HepG2 (cell line): ENCODE measurements at regions of chr12 and their contacts with region 1.

Region 1: DNA sequence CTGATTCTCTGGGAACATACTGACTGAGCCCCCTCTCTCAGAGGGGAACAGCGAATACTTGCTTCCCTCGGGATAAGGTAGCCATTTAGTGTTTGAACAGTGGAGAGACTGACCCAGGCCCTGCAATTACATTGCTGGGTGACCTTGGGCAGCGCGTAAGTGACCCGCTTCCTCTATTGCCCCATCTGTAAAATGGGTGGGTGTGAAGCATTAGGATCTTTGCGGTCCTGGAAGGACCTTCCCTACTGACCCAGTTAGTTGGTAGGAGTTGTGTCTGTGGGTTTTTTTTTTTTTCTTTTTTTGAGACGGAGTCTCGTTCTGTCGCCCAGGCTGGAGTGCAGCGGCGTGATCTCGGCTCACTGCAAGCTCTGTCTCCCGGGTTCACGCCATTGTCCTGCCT is 1.2 kb upstream of the KMT5A start:
- DNase-seq: no peak
- ATAC-seq: no peak
- H3K4me3 ChIP-seq: peak overlapping the region; percentile 66 to 73 (median 68)
- H3K27ac ChIP-seq: peak overlapping the region; percentile 85
- H3K4me1 ChIP-seq: peaks cover 46% of the 10 kb centered on the region
- H3K27me3 ChIP-seq: no peaks in the 10 kb centered on the region
- CTCF ChIP-seq: no peak
- EP300 ChIP-seq: no peak
- POLR2A ChIP-seq: no peak
- RAD21 ChIP-seq: no peak

Region 2: DNA sequence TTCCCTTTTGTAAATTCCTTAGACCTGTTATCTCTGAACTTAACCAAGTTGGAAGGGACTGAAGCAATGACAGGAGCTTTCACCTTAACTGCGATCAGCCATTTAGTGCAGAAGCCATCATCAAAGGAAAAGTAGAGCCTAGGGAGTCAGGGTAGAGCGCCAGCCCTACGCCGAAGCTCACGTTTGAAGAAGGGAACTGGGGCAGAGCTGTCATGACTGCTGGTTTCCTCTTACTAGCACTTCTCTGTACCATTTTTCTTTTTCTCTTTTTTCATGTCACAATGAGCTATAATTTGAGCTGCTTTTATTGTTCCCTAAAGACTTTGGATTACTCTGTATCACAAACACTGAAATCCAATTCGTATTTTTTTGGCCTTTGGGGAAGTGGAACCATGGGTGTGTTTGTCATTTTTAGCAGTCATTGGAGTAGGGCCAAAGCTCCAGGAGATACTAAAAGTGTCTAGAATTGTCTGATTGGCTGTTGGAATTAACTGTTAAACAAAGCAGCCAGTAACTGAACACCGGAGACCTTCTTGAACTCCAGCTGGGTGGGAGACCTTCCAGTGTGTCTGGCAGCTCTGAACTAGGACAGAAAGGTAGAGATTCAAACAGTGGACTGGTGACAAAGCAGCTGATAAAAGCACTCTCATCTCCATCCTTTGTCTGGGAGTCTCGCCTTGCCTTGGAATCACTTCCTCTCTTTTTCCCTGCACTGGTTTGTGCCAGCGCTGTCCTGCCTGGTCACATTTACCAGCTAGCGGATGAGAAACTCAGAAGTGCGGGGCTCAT is 140.4 kb before region 1 on chr12:
- CTCF ChIA-PET with region 1: no interaction called
- POLR2A ChIA-PET with region 1: no interaction called
- in situ Hi-C with region 1: no loop called
- intact Hi-C with region 1: no loop called
- DNase-seq: no peak
- ATAC-seq: no peak
- H3K4me3 ChIP-seq: no peak overlapping the region
- H3K27ac ChIP-seq: peak overlapping the region; percentile 3
- H3K4me1 ChIP-seq: peaks cover 14% of the 10 kb centered on the region
- H3K27me3 ChIP-seq: no peaks in the 10 kb centered on the region
- CTCF ChIP-seq: no peak
- EP300 ChIP-seq: no peak
- POLR2A ChIP-seq: no peak
- RAD21 ChIP-seq: no peak

Region 3: DNA sequence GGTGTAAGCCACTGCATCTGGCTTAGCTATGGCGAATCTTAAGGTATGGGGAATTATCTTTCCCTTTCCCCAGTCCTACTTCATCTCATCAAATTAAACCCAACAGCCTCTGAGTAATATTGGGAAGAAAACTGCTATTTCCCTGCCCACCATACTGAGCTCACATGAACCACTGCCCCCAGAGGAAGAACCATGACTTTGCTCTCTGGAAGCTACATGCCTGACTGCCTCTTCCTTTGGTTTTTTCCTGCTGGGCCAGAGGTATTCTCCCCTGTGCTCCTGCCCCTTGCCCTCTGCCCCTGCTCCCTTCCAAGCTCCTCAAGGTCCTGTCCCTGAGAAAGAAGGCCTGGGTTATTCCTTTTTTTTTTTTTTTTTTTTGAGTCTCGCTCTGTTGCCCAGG is 38.6 kb after region 1 on chr12:
- CTCF ChIA-PET with region 1: no interaction called
- POLR2A ChIA-PET with region 1: no interaction called
- in situ Hi-C with region 1: no loop called
- intact Hi-C with region 1: loop called (anchors 2 kb)
- DNase-seq: no peak
- ATAC-seq: no peak
- H3K4me3 ChIP-seq: no peak overlapping the region
- H3K27ac ChIP-seq: no peak overlapping the region
- H3K4me1 ChIP-seq: no peaks in the 10 kb centered on the region
- H3K27me3 ChIP-seq: no peaks in the 10 kb centered on the region
- CTCF ChIP-seq: no peak
- EP300 ChIP-seq: no peak
- POLR2A ChIP-seq: no peak
- RAD21 ChIP-seq: no peak

Region 4: GRCh38 chr12:123897221-123897620 is 514.5 kb after region 1 on chr12:
- CTCF ChIA-PET with region 1: no interaction called
- POLR2A ChIA-PET with region 1: no interaction called
- in situ Hi-C with region 1: no loop called
- intact Hi-C with region 1: no loop called
- DNase-seq: no peak
- ATAC-seq: no peak
- H3K4me3 ChIP-seq: no peak overlapping the region
- H3K27ac ChIP-seq: no peak overlapping the region
- H3K4me1 ChIP-seq: peaks cover 24% of the 10 kb centered on the region
- H3K27me3 ChIP-seq: peaks cover 7 to 53% of the 10 kb centered on the region in 2 experiments
- CTCF ChIP-seq: no peak
- EP300 ChIP-seq: no peak
- POLR2A ChIP-seq: no peak
- RAD21 ChIP-seq: no peak